Endothelial cell of umbilical vein (primary cell): ENCODE measurements at regions of chr11 and their contacts with region 1.

Region 1: DNA sequence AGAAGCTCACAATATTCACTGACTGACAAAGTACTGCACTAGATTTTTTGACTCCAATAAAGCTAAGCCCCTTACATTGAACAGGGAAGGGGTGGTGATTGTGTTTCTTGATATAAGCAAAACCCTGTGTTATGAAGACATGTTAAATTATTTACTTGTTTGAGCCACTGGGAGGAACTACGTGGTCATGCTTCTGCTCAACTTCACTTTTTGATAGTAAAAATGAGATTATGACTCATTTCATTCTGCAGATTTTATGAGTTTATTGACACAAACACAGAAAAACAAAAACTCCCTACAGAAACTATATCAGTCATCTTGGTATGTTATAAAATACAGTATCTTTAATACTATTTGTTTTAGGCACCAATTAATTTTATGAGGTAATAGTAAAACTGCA is 124.7 kb downstream of the CADM1 start:
- DNase-seq: no peak
- H3K4me3 ChIP-seq: no peak overlapping the region
- H3K27ac ChIP-seq: no peak overlapping the region
- H3K4me1 ChIP-seq: no peaks in the 10 kb centered on the region
- H3K27me3 ChIP-seq: no peaks in the 10 kb centered on the region
- CTCF ChIP-seq: no peak
- POLR2A ChIP-seq: no peak

Region 2: DNA sequence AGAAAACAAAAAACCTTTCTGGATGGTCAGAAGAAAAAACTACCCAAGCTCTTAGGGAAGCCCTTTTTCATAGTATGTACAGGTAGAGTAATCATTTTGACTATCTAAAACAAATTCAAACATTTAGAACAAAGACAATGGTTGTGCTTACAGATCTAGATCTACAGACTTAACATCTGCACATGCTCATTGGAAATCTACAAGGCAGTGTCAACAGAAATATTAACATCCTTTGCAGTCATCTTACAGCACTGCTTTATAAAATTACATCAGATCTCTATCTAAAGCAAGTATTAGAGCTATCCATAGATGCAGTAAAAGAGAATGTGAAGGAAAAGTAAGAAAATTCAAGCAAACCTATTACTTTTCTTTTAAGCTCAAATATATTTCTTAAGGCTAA is 14.4 kb after region 1 on chr11:
- CTCF ChIA-PET with region 1: interaction called, 3 read pairs
- POLR2A ChIA-PET with region 1: no interaction called
- dilution Hi-C with region 1: no loop called
- intact Hi-C with region 1: loop called (anchors 2 kb)
- DNase-seq: no peak
- H3K4me3 ChIP-seq: no peak overlapping the region
- H3K27ac ChIP-seq: no peak overlapping the region
- H3K4me1 ChIP-seq: no peaks in the 10 kb centered on the region
- H3K27me3 ChIP-seq: no peaks in the 10 kb centered on the region
- CTCF ChIP-seq: no peak
- POLR2A ChIP-seq: no peak